ENCODE measurements at regions of chr11 and their contacts with region 1.

Region 1: GRCh38 chr11:17354601-17354991 is 3.0 kb downstream of the NCR3LG1 start:
- DNase-seq: peak in 1 of 2 donors; percentile 86
- H3K4me3 ChIP-seq: peak overlapping the region in 1 of 2 donors; percentile 98
- H3K27ac ChIP-seq: no peak overlapping the region
- H3K4me1 ChIP-seq: peaks cover 0 to 7% of the 10 kb centered on the region in 2 donors
- H3K27me3 ChIP-seq: no peaks in the 10 kb centered on the region
- CTCF ChIP-seq: peak; percentile 39 to 57 (median 53)

Region 2: DNA sequence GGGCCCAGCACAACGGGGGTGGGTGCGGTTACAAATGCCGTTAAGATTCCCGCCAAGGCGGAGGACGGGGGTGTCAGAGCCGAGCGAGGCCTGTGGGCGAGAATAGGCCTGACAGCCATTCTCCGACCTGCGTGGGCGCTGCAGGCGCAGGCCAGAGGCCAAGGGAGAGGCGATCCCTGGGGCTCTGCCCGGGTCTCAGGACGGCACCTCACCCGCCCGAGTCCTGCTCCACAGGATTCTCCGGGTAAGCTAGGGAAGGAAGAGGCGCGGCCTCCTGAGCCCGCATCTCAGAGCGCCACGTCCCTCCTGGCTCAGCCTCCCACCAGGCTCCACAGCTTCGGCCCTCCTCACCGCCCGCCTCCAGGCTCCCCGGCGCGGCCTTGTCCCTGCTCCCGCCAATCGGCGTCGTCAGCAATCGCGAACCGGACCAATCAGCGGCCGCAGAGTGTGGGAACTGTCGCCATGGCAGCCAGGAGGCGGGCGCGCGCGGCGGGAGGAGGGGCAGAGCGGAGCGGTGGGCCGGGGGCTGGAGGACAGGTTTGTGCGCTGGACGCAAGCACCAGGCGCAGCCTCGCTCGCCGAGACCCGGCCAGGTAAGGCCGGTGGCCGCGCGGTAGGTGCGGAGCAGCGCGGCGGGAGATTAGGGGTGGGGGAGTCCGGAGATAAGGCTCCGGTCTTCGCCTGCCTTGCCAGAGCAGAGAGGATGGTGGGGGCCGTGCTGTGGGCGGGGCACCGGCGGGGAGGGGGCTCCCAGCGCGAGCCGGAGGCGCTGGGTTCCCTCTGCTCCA is 78.2 kb before region 1 on chr11 and contains the start of gene NUCB2:
- intact Hi-C with region 1: loop called (anchors 1 kb)
- DNase-seq: peak; percentile 88 to 97
- H3K4me3 ChIP-seq: peak within 1 kb of the TSS; percentile 78 to 85
- H3K27ac ChIP-seq: peak within 1 kb of the TSS; percentile 86 to 92
- H3K4me1 ChIP-seq: peaks cover 0 to 5% of the 10 kb centered on the region in 2 donors
- H3K27me3 ChIP-seq: no peaks in the 10 kb centered on the region
- CTCF ChIP-seq: no peak
- total RNA-seq, gene NUCB2: 47.8 TPM

Region 3: GRCh38 chr11:17384002-17384511 is 29.5 kb after region 1 on chr11:
- intact Hi-C with region 1: loop called (anchors 1 kb)
- DNase-seq: peak in 1 of 2 donors; percentile 88
- H3K4me3 ChIP-seq: no peak overlapping the region
- H3K27ac ChIP-seq: no peak overlapping the region
- H3K4me1 ChIP-seq: peaks cover 7 to 8% of the 10 kb centered on the region in 2 donors
- H3K27me3 ChIP-seq: no peaks in the 10 kb centered on the region
- CTCF ChIP-seq: peak; percentile 87 to 96 (median 88)